Right lobe of liver (tissue), 6 donors: ENCODE measurements at regions of chr5 and their contacts with region 1.

Region 1: DNA sequence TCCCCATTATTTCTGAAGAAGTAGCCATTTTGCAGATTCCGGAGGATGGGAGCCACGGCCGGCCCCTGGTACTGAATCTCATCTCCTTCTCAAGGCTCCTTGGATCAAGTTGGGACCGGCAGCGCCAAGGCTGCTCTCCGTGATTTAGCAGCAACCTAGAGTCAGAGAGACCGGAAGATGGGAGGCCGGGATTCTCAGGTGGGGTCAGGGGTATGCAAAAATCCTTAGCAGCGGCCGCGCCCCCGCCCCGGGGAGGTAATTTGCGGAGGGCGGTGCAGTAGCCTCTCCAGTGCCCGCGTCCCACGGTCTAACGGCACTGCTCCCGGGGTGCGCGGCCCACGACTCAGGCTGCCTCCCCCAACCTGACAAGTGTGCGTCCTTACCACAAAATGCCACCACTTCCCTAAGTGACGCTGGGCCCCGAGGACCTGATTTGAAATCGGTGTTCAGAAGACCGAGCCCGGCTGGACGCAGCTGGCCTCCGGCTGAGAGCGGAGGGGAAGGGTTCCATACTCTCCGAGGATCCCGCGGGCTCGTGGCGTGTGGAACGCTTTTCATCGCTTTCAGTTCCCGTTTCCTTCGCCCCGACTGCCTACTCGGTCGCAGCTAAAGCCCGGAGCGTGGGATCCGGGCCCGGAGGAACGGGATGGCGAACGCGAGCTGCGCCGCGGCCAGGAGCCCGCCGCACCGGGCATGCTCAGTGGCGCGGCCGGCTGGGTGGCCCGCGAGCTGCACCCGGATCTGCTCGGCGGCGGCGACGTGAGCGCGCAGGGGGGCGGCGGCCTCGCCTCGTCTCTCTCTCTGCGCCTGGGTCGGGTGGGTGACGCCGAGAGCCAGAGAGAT is at the start of gene SCAMP1:
- DNase-seq: peak; percentile 92 to 94 (median 94)
- ATAC-seq: peak; percentile 94 to 96 (median 96)
- H3K4me3 ChIP-seq: peak within 1 kb of the TSS; percentile 95 to 96 (median 95)
- H3K27ac ChIP-seq: peak within 1 kb of the TSS; percentile 84 to 91 (median 88)
- H3K4me1 ChIP-seq: peaks cover 0 to 6% (median 0%) of the 10 kb centered on the region in 4 donors
- H3K27me3 ChIP-seq: no peaks in the 10 kb centered on the region
- CTCF ChIP-seq: peak; percentile 34 to 57 (median 42)
- POLR2A ChIP-seq: peak; percentile 84
- total RNA-seq, gene SCAMP1: 10.4 to 18.4 (median 11.1) TPM

Region 2: GRCh38 chr5:77400645-77401044 is 959.4 kb before region 1 on chr5:
- intact Hi-C with region 1: no loop called
- DNase-seq: no peak
- ATAC-seq: peak in 3 of 4 donors; percentile 13 to 46 (median 31)
- H3K4me3 ChIP-seq: no peak overlapping the region
- H3K27ac ChIP-seq: no peak overlapping the region
- H3K4me1 ChIP-seq: no peaks in the 10 kb centered on the region
- H3K27me3 ChIP-seq: no peaks in the 10 kb centered on the region
- CTCF ChIP-seq: no peak
- POLR2A ChIP-seq: no peak

Region 3: DNA sequence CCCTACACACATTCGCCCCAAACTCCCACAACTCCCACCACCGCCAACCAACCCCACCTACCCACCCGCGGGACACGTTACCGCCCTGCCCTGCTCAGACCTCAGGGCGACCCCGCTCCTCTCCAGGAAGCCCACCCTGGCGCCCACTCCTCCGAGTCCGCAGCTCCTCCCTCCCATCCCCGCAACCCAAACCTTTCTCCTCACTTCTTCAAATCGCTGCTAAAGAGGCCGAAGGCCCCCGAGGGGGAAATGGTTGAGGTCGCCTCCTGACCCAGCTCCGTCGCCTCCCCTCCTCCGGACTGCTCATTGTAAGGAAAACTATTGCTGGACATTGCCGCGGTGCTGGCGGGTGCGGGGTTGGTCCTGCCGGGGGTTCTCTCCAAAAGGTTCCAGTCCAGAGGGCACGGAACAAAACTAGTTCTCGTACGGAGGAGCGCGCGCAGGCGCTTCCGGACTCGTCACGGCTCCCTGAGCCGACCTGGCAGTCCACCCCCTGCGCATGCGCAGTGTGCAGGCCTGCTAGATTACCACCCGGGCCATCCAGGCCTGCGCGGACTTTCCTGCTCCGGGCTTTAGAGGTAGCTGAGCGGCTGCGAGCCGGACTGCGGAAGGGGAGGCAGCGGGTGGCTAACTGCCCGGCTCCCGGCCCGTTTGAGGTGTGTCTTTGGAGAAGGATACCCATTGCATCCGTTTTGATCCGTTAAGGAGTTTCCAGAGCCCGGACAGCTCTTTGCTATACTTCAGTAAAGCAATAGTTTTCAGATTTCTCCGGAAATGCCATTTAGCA is 65.6 kb before region 1 on chr5 and contains the start of gene AP3B1:
- intact Hi-C with region 1: loop called (anchors 5 to 10 kb)
- DNase-seq: peak; percentile 100
- ATAC-seq: peak; percentile 96 to 98 (median 96)
- H3K4me3 ChIP-seq: peak within 1 kb of the TSS; percentile 86 to 88 (median 87)
- H3K27ac ChIP-seq: peak within 1 kb of the TSS; percentile 83 to 92 (median 85)
- H3K4me1 ChIP-seq: peaks cover 0 to 19% (median 3%) of the 10 kb centered on the region in 4 donors
- H3K27me3 ChIP-seq: no peaks in the 10 kb centered on the region
- CTCF ChIP-seq: no peak
- POLR2A ChIP-seq: peak; percentile 95
- total RNA-seq, gene AP3B1: 11.4 to 17.9 (median 12.9) TPM

Region 4: DNA sequence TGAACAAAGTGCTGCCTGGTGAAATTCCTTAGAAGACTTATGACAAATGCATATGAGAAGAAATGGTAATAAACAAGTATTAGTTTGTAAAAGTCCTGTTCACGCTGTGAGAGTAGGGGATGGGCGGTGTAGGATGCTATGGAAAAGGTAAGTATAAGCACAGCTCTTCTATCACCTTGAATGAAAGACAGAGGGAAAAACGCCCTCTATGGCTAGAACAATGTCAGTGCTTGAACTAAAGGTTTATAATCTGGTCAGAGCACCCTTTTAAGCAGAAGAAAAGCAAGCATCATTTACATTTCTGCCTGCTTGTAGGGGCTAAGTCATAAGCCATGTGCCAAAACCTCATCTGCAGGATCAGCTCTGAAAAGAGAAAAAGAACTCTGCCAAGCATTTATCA is 173.3 kb after region 1 on chr5:
- intact Hi-C with region 1: no loop called
- DNase-seq: no peak
- ATAC-seq: peak in 3 of 4 donors; percentile 22 to 31 (median 25)
- H3K4me3 ChIP-seq: no peak overlapping the region
- H3K27ac ChIP-seq: no peak overlapping the region
- H3K4me1 ChIP-seq: no peaks in the 10 kb centered on the region
- H3K27me3 ChIP-seq: no peaks in the 10 kb centered on the region
- CTCF ChIP-seq: peak; percentile 22 to 38 (median 32)
- POLR2A ChIP-seq: no peak